Activated CD4-positive, alpha-beta T cell treated with anti-CD3 and anti-CD28 coated beads for 36 hours (primary cell): ENCODE measurements at regions of chr4 and their contacts with region 1.

Region 1: DNA sequence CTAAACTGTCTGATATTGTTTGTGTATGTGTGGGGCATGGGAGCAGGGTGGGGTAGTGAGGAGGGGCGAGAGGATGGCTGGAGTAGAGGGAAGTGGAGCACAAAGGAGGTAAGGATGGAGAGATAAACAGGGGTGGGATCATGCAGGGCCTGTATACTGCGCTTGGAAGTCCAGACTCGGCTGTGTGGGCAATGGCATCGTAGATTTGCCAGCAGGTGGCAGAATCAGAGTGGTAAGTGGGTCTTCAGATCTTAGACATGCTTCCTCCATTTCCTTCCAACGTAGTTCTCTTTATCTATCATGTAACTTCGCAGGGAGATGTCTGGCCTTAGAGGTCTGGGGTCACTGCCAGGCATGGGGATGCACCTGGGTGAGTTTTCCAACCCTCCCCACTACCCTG is 155.5 kb downstream of the PDGFRA start:
- DNase-seq: peak; percentile 42
- ATAC-seq: no peak
- H3K4me3 Mint-ChIP-seq: no peak overlapping the region
- H3K27ac Mint-ChIP-seq: no peak overlapping the region
- H3K4me1 Mint-ChIP-seq: no peaks in the 10 kb centered on the region
- H3K27me3 Mint-ChIP-seq: peaks cover 4% of the 10 kb centered on the region

Region 2: GRCh38 chr4:54337009-54337408 is 47.6 kb before region 1 on chr4:
- CTCF ChIA-PET with region 1: no interaction called
- POLR2A ChIA-PET with region 1: no interaction called
- intact Hi-C with region 1: no loop called
- DNase-seq: no peak
- ATAC-seq: no peak
- H3K4me3 Mint-ChIP-seq: no peak overlapping the region
- H3K27ac Mint-ChIP-seq: no peak overlapping the region
- H3K4me1 Mint-ChIP-seq: no peaks in the 10 kb centered on the region
- H3K27me3 Mint-ChIP-seq: peaks cover 5% of the 10 kb centered on the region

Region 3: DNA sequence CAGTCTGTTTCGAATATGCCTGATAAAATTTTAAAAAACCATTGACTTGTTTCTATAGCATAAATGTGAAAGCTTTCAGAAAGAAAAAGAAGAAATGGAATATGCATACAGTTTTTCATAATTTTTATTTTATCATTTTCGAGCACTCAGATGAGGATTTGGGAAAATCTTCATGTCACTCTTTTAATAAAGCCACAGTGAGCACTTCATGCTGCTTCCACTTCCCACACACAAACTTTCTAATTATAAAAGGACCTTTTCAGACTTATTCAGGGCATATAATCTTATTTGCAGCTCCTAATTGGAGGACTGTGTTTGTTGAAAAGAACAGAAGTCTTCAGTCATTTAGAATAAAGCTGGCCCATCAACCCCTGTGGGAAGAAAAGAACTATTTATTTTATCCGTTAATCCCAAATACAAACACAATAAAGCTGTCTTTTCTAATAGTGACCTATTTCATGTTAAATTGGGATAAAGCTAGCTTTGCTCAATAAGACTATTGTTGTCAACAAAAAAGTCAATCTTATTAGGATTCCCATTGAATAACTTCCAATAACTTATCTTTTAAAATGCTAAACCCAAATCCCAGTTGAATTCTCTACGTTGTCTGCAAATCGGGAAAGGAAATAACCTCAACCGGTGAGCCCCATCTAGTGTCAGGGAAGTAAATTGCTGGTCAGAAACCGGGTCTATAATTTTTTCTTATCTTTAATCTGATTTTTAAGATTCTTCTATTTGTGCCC is 56.0 kb after region 1 on chr4:
- CTCF ChIA-PET with region 1: no interaction called
- POLR2A ChIA-PET with region 1: no interaction called
- intact Hi-C with region 1: loop called in 1 of 2 experiments (anchors 1 kb)
- DNase-seq: no peak
- ATAC-seq: no peak
- H3K4me3 Mint-ChIP-seq: no peak overlapping the region
- H3K27ac Mint-ChIP-seq: no peak overlapping the region
- H3K4me1 Mint-ChIP-seq: no peaks in the 10 kb centered on the region
- H3K27me3 Mint-ChIP-seq: peaks cover 12% of the 10 kb centered on the region

Region 4: DNA sequence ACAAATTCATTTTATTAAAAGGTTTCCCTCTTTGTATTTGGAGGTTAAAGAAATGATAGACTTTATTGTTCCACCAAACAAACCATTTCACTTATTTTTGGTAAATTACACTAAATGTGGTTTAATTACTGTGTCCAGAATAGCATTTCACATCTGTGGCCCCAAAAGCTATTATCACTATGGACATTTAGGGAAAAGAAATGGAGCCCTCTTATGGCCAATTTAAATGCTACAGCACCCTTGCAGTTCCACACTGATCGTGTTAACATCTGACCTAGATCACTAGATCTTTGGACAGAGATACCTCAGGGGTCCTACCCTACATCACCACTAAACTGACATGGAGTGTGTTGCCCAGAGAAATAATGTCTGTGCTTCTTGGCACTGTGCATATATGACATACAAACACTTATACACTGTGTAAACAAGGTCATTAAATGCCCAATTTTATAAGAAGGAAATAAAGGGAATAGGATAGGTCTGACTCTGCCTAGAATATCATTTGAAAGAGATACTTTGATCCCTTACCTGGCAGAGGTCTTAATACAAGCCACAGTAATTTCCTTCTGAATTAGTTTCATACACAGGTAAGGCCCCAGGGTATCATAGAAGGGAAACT is 576.9 kb after region 1 on chr4:
- CTCF ChIA-PET with region 1: no interaction called
- POLR2A ChIA-PET with region 1: no interaction called
- intact Hi-C with region 1: loop called in 1 of 2 experiments (anchors 10 kb)
- DNase-seq: no peak
- ATAC-seq: peak; percentile 44
- H3K4me3 Mint-ChIP-seq: no peak overlapping the region
- H3K27ac Mint-ChIP-seq: no peak overlapping the region
- H3K4me1 Mint-ChIP-seq: peaks cover 14% of the 10 kb centered on the region
- H3K27me3 Mint-ChIP-seq: no peaks in the 10 kb centered on the region